Heart right ventricle (tissue), 16 donors: ENCODE measurements at regions of chr14 and their contacts with region 1.

Region 1: DNA sequence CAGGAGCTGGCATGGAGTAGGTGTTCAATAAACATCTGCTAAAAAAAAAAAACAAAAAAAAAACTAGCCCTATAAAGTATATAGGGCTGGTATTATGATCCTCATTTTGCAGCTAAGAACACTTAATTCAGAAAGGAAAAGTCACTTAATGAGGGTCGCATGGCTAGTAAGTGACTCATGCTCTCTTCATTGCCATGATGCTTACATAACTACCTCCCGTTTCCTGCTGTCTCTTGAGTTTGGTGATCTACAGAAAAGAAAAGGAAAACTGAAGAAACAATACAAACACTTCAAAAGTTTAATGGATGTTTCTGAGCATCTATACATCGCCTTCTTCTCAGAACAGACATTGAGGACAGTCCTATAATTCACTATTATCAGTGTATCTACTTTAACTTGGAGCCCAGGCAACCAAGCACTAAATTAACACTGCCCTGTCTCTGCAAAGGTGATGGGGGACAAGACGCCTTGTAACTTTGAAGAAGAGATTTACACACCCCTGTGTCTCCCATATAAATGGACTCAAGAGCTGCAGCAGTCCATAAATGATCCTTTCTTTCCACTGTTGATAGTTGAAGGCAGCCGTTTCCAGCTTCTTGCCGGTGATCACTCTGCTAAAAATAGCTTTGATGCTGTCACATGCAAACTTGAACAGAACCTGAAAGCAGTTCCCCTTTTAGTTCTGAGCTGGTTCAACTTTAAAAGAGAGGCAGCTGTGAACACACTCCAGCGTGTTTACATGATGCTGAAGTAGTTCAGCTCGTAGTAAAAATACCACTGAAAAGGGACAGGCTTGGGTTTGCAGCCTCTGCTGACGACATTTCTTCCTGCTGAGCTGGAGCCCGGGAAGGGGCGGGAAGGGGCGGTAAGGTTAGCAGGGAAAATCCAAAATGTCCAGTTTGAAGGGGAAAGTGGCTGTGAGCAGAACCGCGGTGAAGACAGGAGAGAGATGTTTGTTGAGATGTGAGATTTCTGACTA is 113.3 kb downstream of the FOXN3 start:
- DNase-seq: peak; percentile 29 to 80
- ATAC-seq: peak; percentile 71 to 89 (median 86)
- H3K4me3 ChIP-seq: peak overlapping the region in 8 of 10 donors; percentile 2 to 34 (median 29)
- H3K27ac ChIP-seq: peak overlapping the region; percentile 64 to 95 (median 88)
- H3K4me1 ChIP-seq: peaks cover 8 to 69% (median 52%) of the 10 kb centered on the region in 9 donors
- H3K27me3 ChIP-seq: no peaks in the 10 kb centered on the region
- CTCF ChIP-seq: no peak

Region 2: DNA sequence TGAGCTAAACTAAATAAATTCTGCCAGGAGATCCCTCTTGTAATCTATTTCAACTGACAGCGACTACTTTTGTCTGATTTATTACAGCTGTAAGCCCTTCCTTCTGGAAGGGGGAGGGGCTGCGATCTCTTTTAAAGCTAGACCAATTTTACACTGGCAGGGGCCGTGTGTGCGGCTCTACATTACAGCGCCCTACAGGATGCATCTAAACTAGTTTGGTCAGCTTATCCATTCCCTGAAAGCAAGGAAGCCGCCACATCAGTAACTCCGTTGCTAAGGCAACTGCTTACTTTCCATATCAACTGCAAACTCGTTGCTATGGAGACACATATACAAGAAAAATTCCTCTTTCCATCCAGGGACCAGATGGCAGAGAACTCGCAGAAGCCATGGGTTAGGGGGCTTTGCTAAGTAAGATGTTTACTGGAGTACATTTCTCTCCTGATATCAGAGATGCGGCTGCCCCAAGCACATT is 95.9 kb after region 1 on chr14:
- intact Hi-C with region 1: loop called in 1 of 10 experiments (anchors 10 kb)
- DNase-seq: peak in 1 of 2 donors; percentile 38
- ATAC-seq: peak; percentile 49 to 79 (median 70)
- H3K4me3 ChIP-seq: peak overlapping the region in 5 of 10 donors; percentile 17 to 38 (median 26)
- H3K27ac ChIP-seq: peak overlapping the region in 6 of 10 donors; percentile 2 to 49 (median 38)
- H3K4me1 ChIP-seq: peaks cover 2 to 68% (median 35%) of the 10 kb centered on the region in 9 donors
- H3K27me3 ChIP-seq: no peaks in the 10 kb centered on the region
- CTCF ChIP-seq: no peak

Region 3: GRCh38 chr14:89489761-89490437 is 186.2 kb after region 1 on chr14:
- intact Hi-C with region 1: no loop called
- DNase-seq: no peak
- ATAC-seq: peak in 2 of 8 donors; percentile 27 to 30
- H3K4me3 ChIP-seq: peak overlapping the region in 2 of 10 donors; percentile 5 to 18
- H3K27ac ChIP-seq: no peak overlapping the region
- H3K4me1 ChIP-seq: peaks cover 0 to 37% (median 21%) of the 10 kb centered on the region in 9 donors
- H3K27me3 ChIP-seq: no peaks in the 10 kb centered on the region
- CTCF ChIP-seq: no peak

Region 4: GRCh38 chr14:90093942-90094595 is 790.3 kb after region 1 on chr14:
- intact Hi-C with region 1: no loop called
- DNase-seq: no peak
- ATAC-seq: peak in 1 of 8 donors; percentile 26
- H3K4me3 ChIP-seq: no peak overlapping the region
- H3K27ac ChIP-seq: peak overlapping the region in 1 of 10 donors; percentile 27
- H3K4me1 ChIP-seq: peaks cover 0 to 15% (median 0%) of the 10 kb centered on the region in 9 donors
- H3K27me3 ChIP-seq: no peaks in the 10 kb centered on the region
- CTCF ChIP-seq: no peak